K562 (cell line): ENCODE measurements at regions of chr5 and their contacts with region 1.

Region 1: GRCh38 chr5:69042915-69043658 is 50.7 kb upstream of the SLC30A5 start:
- DNase-seq: peak; percentile 71 to 93 (median 75)
- ATAC-seq: peak; percentile 78
- H3K4me3 ChIP-seq: no peak overlapping the region
- H3K27ac ChIP-seq: peak overlapping the region; percentile 31
- H3K4me1 ChIP-seq: peaks cover 4 to 26% of the 10 kb centered on the region in 2 experiments; a peak in 3 of 5 replicates
- H3K27me3 ChIP-seq: no peaks in the 10 kb centered on the region
- CTCF ChIP-seq: peak; percentile 65 to 91 (median 75)
- EP300 ChIP-seq: no peak
- POLR2A ChIP-seq: no peak
- RAD21 ChIP-seq: peak; percentile 89 to 91

Region 2: GRCh38 chr5:69083412-69083811 is 40.3 kb after region 1 on chr5:
- CTCF ChIA-PET with region 1: interaction called, 3 read pairs
- POLR2A ChIA-PET with region 1: no interaction called
- in situ Hi-C with region 1: no loop called
- intact Hi-C with region 1: loop called (anchors 1 kb)
- DNase-seq: peak in 3 of 4 experiments; percentile 29 to 75 (median 45)
- ATAC-seq: peak; percentile 96
- H3K4me3 ChIP-seq: no peak overlapping the region
- H3K27ac ChIP-seq: no peak overlapping the region
- H3K4me1 ChIP-seq: peaks cover 0 to 19% of the 10 kb centered on the region in 2 experiments; a peak in 3 of 5 replicates
- H3K27me3 ChIP-seq: no peaks in the 10 kb centered on the region
- CTCF ChIP-seq: peak; percentile 59 to 80 (median 65)
- EP300 ChIP-seq: 0 out of 2 replicates have a peak, but pooled peaks have one; percentile 16
- POLR2A ChIP-seq: no peak
- RAD21 ChIP-seq: peak; percentile 57 to 82

Region 3: GRCh38 chr5:69369369-69370121 is 326.5 kb after region 1 on chr5 and contains the starts of genes AK6, RAD17 and TAF9:
- CTCF ChIA-PET with region 1: no interaction called
- POLR2A ChIA-PET with region 1: no interaction called
- in situ Hi-C with region 1: no loop called
- intact Hi-C with region 1: loop called (anchors 2 kb)
- DNase-seq: peak; percentile 87 to 95 (median 90)
- ATAC-seq: peak; percentile 90
- H3K4me3 ChIP-seq: peak within 1 kb of the TSS; percentile 70
- H3K27ac ChIP-seq: peak within 1 kb of the TSS; percentile 99
- H3K4me1 ChIP-seq: peaks cover 0 to 6% of the 10 kb centered on the region in 2 experiments; a peak in 4 of 5 replicates
- H3K27me3 ChIP-seq: no peaks in the 10 kb centered on the region
- CTCF ChIP-seq: no peak
- EP300 ChIP-seq: no peak
- POLR2A ChIP-seq: peak; percentile 93
- RAD21 ChIP-seq: no peak
- polyA plus RNA-seq, gene AK6: 613 to 669 TPM
- polyA plus RNA-seq, gene RAD17: 25.6 to 44.4 TPM
- polyA plus RNA-seq, gene TAF9: 519 to 566 TPM